Panc1 (cell line): ENCODE measurements at regions of chr1 and their contacts with region 1.

Region 1: DNA sequence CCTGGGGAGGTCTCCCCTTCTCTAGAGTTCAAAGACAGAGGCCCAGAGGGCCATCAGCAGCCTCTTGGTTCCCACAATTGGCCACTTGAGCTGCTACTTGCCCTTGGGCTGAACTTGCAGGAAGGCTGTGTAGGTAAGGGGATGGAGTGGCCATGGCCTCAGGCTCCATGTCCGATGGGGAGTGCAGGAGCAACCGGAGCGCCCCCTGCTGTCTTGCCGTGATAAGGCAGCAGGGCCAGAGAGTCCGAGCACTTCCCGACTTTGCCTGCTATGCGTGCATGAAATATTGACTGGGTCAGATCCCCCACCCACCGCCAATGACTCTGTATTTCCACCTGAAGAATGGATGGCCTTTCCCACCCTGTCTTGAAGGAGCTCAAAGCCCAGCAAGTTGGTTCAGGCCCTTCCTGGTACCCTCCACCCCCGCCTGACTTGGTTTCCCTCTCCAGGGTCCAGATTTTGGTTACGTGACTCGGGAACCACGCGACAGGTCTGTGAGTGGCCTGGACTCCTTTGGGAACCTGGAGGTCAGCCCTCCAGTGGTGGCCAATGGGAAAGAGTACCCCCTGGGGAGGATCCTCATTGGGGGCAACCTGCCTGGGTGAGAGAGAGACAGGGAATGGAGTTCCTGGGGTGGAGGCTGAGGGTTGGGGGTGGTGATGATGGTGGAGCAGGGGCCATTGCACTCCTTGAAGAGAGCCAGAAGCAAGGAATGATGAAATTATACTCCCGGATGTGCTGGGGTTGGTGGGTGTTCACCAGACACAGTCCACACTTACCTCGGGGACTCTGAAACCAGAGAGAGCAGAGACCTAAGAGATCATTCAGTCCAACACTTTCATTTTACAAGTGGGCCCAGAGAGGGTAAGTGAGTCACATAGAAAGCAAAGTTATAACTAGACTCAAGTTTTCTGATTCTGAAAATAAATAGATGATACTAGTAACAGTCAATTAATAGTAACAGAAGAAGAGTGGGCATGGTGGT is 25.6 kb downstream of the PADI3 start:
- DNase-seq: no peak
- ATAC-seq: peak; percentile 79
- H3K4me3 ChIP-seq: no peak overlapping the region
- H3K27ac ChIP-seq: peak overlapping the region; percentile 59; the same call in 1 of the 2 replicates
- H3K4me1 ChIP-seq: no peaks in the 10 kb centered on the region
- H3K27me3 ChIP-seq: no peaks in the 10 kb centered on the region
- CTCF ChIP-seq: peak; percentile 94

Region 2: GRCh38 chr1:17307946-17308345 is 33.5 kb after region 1 on chr1 and contains the start of gene PADI4:
- CTCF ChIA-PET with region 1: no interaction called
- POLR2A ChIA-PET with region 1: interaction called, 11 read pairs
- in situ Hi-C with region 1: no loop called
- intact Hi-C with region 1: no loop called
- DNase-seq: no peak
- ATAC-seq: no peak
- H3K4me3 ChIP-seq: no peak within 1 kb of the TSS
- H3K27ac ChIP-seq: no peak within 1 kb of the TSS
- H3K4me1 ChIP-seq: peaks cover 11% of the 10 kb centered on the region; the same call in 1 of the 2 replicates
- H3K27me3 ChIP-seq: no peaks in the 10 kb centered on the region
- CTCF ChIP-seq: no peak
- total RNA-seq, gene PADI4: not detected

Region 3: DNA sequence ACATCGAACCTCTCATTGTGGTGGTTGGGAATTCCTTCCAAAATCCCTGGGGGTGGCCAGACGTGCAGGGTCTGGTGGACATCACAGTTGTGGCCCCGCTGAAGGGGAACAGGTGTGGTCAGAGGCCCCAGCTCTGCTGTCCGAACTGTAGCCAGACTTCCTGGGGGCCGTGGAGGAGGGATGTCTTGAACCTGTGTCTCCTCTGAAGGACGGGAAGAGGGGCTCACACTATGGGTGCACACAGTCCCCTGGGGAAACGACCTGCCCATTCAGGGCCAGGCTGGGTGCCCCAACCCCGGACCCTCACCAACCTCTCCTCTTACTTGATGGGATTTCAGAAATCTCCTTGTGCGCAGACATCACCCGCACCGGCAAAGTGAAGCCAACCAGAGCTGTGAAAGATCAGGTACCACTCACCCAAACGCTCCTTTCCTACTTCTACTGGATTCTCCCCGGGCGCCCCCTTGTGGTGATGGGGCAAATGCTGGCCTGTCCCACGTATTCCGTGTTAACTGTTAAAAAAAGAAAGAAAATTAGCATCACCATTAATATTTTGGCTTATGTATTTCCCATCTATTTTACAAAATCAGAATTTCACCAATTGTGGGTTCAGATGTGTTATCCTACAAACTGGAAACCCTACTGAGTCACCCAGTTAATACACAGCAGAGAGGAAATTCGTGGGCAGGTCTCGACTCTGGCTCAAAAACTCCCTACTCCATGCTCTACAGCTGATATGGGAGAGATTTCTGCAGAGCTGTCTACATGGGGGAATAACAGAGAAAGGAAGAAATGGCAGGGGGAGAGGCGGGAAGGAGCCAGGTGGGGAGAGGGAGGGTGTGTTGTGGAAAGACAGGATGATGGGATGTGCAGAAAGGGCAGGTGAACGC is 61.6 kb after region 1 on chr1:
- CTCF ChIA-PET with region 1: interaction called, 10 read pairs
- POLR2A ChIA-PET with region 1: no interaction called
- in situ Hi-C with region 1: no loop called
- intact Hi-C with region 1: no loop called
- DNase-seq: peak; percentile 39
- ATAC-seq: peak; percentile 96
- H3K4me3 ChIP-seq: peak overlapping the region in 1 of 2 experiments; percentile 18; a peak in 1 of 4 replicates
- H3K27ac ChIP-seq: no peak overlapping the region; the same call in 1 of the 2 replicates
- H3K4me1 ChIP-seq: peaks cover 9% of the 10 kb centered on the region; the same call in 1 of the 2 replicates
- H3K27me3 ChIP-seq: no peaks in the 10 kb centered on the region
- CTCF ChIP-seq: peak; percentile 97

Region 4: DNA sequence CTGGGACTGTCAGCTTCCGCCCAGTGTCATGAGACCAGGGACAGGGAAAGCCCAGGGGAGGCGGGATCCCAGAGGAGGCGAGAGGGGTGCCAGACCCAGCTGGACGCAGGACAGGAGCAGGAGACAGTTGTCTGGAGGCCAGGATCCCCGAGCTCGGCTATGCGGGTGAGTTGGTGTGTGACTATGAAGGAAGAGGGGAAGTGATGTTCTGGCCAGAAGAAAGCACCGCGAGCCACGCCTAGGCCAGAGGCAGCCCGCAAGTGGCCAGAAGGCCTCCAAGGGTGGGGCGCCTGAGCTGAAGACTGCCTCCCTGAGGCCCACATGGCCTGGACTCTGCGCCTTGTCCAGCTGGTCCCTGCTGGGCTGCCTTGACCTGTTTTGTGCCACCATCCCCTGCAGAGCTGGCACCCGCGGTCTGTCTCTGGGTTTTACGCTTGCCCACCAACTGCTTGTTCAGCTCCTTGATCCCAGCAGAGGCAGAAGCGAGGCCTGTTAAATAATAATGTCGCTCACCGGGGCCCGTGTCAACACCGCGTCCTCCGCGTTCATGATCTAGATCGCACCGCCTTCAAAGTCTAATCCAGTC is 395.5 kb after region 1 on chr1:
- CTCF ChIA-PET with region 1: interaction called, 10 read pairs
- POLR2A ChIA-PET with region 1: no interaction called
- in situ Hi-C with region 1: no loop called
- intact Hi-C with region 1: no loop called
- DNase-seq: no peak
- ATAC-seq: no peak
- H3K4me3 ChIP-seq: no peak overlapping the region
- H3K27ac ChIP-seq: no peak overlapping the region
- H3K4me1 ChIP-seq: no peaks in the 10 kb centered on the region
- H3K27me3 ChIP-seq: no peaks in the 10 kb centered on the region
- CTCF ChIP-seq: no peak